ENCODE measurements at regions of chr2 and their contacts with region 1.

Region 1: DNA sequence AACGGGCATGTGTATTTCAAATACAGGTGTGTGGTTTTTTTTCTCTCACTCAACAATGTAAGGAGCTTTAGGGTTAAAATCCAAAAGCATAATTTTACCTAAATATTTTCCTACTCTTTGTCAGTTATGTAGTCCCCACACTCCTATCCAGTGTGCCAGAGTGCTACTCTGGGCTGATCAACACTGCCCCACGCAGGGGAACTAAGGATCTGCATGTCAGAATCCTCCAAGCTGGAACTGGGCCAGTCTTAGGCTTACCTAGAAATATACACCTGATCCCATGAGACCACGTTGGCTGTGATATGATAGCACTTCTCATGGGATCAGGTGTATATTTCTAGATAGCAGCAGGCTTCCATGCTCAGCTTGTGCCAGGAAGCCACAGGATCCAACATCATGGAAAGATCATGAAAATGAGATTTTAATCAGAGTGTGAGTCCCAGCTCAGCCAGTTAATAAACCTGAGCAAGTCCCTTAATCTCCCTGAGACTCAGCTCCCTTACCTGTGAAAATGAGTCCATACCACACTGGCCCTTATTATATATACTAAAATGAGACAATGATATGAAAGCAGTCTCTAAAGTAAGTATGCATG is 29.7 kb downstream of the CCDC141 start:
- DNase-seq: peak; percentile 75
- ATAC-seq: peak; percentile 100
- H3K4me3 Mint-ChIP-seq: no peak overlapping the region
- H3K27ac Mint-ChIP-seq: no peak overlapping the region
- H3K4me1 Mint-ChIP-seq: no peaks in the 10 kb centered on the region
- H3K27me3 Mint-ChIP-seq: no peaks in the 10 kb centered on the region
- CTCF ChIP-seq: peak; percentile 52

Region 2: DNA sequence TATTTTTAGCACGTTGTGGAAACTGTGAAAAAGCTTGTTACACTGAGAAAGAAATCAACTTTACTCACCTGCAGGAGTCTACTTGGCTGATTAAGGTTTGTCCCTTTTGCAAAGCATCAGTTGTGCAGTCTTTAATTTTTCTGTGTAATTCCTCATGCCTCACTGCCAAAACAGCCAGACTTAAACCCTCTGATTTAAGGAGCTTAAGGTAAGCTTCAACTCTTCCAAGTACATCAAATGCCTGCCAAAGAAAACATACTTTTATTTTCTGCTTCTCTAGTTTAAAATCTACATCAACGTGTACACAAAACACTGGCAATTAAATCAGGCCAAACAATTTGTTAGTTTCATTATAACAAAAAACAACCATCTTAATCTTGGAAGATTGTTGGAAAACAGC is 115.0 kb before region 1 on chr2:
- CTCF ChIA-PET with region 1: no interaction called
- POLR2A ChIA-PET with region 1: no interaction called
- DNase-seq: no peak
- ATAC-seq: no peak
- H3K4me3 Mint-ChIP-seq: no peak overlapping the region
- H3K27ac Mint-ChIP-seq: no peak overlapping the region
- H3K4me1 Mint-ChIP-seq: no peaks in the 10 kb centered on the region
- H3K27me3 Mint-ChIP-seq: no peaks in the 10 kb centered on the region
- CTCF ChIP-seq: no peak

Region 3: GRCh38 chr2:178978667-178979066 is 41.6 kb before region 1 on chr2:
- CTCF ChIA-PET with region 1: no interaction called
- POLR2A ChIA-PET with region 1: no interaction called
- DNase-seq: no peak
- ATAC-seq: no peak
- H3K4me3 Mint-ChIP-seq: no peak overlapping the region
- H3K27ac Mint-ChIP-seq: no peak overlapping the region
- H3K4me1 Mint-ChIP-seq: peaks cover 9% of the 10 kb centered on the region
- H3K27me3 Mint-ChIP-seq: no peaks in the 10 kb centered on the region
- CTCF ChIP-seq: no peak

Region 4: GRCh38 chr2:179129574-179130238 is 109.5 kb after region 1 on chr2:
- CTCF ChIA-PET with region 1: interaction called, 12 read pairs
- POLR2A ChIA-PET with region 1: no interaction called
- DNase-seq: no peak
- ATAC-seq: no peak
- H3K4me3 Mint-ChIP-seq: no peak overlapping the region
- H3K27ac Mint-ChIP-seq: no peak overlapping the region
- H3K4me1 Mint-ChIP-seq: no peaks in the 10 kb centered on the region
- H3K27me3 Mint-ChIP-seq: no peaks in the 10 kb centered on the region
- CTCF ChIP-seq: no peak

Region 5: DNA sequence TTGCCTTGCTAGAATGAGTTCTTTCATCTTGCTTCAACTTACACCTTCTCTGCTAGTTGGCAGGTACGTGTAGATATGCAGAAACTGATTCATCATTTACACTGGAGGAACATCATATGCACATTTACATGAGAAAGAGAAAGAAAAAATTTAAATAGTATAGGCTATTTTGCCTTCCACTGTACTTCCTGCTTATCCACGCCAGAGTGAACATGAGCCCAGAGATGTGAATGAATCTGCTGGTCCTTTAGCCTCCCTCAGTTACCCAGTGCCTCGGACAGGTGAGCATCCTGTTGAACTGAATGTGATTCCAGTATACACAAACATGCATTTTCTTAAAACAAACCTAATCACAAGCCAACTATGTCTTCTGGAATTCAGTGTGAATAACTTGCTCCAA is 160.7 kb after region 1 on chr2:
- CTCF ChIA-PET with region 1: no interaction called
- POLR2A ChIA-PET with region 1: no interaction called
- DNase-seq: no peak
- ATAC-seq: peak; percentile 21; the same call in 1 of the 2 replicates
- H3K4me3 Mint-ChIP-seq: no peak overlapping the region
- H3K27ac Mint-ChIP-seq: peak overlapping the region; percentile 67
- H3K4me1 Mint-ChIP-seq: peaks cover 50% of the 10 kb centered on the region
- H3K27me3 Mint-ChIP-seq: no peaks in the 10 kb centered on the region
- CTCF ChIP-seq: no peak

Region 6: GRCh38 chr2:179612108-179612507 is 591.9 kb after region 1 on chr2:
- CTCF ChIA-PET with region 1: no interaction called
- POLR2A ChIA-PET with region 1: no interaction called
- DNase-seq: no peak
- ATAC-seq: no peak
- H3K4me3 Mint-ChIP-seq: no peak overlapping the region
- H3K27ac Mint-ChIP-seq: no peak overlapping the region
- H3K4me1 Mint-ChIP-seq: peaks cover 31% of the 10 kb centered on the region
- H3K27me3 Mint-ChIP-seq: no peaks in the 10 kb centered on the region; the same call in 1 of the 2 replicates
- CTCF ChIP-seq: no peak